Right cardiac atrium (tissue), 5 donors: ENCODE measurements at regions of chr4 and their contacts with region 1.

Region 1: DNA sequence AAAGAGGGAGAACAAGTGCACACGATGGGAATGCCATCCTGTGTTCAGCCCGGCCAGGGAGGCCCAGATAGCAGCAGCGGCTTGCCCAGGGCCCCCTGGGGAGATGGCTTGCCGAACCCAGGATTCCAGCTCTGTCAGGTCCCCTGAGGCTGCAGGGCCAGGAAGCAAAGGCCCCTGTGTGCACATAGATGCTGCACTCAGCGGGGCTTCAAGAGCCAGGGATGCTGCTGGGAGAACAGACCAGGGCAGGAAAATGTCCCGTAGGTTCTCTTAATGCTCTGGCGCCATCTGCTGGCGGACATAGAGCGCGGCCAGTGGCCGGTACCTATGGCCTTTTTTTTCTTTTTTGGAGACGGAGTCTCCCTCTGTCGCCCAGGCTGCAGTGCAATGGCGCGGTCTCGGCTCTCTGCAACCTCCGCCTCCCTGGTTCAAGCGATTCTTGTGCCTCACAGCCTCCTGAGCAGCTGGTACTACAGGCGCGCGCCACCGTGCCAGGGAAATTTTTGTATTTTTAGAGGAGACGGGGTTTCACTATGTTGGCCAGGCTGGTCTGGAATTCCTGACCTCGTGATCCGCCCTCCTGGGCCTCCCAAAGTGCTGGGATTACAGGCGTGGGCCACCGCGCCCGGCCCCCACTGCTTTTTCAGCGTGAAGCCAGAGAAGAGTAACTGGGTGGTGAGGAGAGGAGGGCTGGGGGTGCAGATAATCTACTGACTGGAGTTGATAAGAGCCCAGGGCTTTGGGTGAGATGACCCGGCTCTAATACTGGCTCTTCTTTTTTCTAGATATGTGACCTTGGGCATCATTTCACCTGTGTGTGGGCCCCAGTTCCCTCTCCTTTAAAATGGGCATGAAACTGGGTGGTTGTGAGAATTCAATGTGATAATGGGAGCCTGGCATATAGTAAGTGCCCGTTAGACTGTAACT is 22.5 kb downstream of the MED28 start:
- DNase-seq: peak; percentile 75 to 90 (median 89)
- ATAC-seq: peak; percentile 81 to 89
- H3K4me3 ChIP-seq: no peak overlapping the region
- H3K27ac ChIP-seq: no peak overlapping the region
- H3K4me1 ChIP-seq: no peaks in the 10 kb centered on the region
- H3K27me3 ChIP-seq: no peaks in the 10 kb centered on the region

Region 2: DNA sequence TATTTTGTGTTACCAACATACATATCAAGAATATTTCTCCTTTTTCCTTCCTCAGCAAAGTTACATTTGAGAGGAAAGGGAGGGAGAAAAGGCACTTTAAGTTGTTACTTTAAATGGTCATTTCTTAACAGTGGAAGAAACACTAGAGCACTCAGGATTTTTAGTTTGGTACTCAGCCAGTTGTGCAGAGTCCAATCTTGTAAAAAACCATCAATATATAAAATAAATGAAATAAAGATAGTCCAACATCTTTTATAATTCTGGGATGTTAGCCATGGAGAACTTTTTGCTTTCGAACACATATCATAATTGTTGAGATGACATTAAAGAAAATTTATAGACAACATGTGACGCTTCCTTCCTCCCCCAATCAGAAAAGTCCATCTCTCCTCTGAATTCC is 378.9 kb before region 1 on chr4:
- intact Hi-C with region 1: no loop called
- DNase-seq: no peak
- ATAC-seq: no peak
- H3K4me3 ChIP-seq: no peak overlapping the region
- H3K27ac ChIP-seq: no peak overlapping the region
- H3K4me1 ChIP-seq: no peaks in the 10 kb centered on the region
- H3K27me3 ChIP-seq: no peaks in the 10 kb centered on the region

Region 3: GRCh38 chr4:17544831-17545234 is 92.1 kb before region 1 on chr4:
- intact Hi-C with region 1: loop called in 3 of 4 experiments (anchors 2 to 10 kb)
- DNase-seq: no peak
- ATAC-seq: no peak
- H3K4me3 ChIP-seq: no peak overlapping the region
- H3K27ac ChIP-seq: no peak overlapping the region
- H3K4me1 ChIP-seq: no peaks in the 10 kb centered on the region
- H3K27me3 ChIP-seq: no peaks in the 10 kb centered on the region

Region 4: DNA sequence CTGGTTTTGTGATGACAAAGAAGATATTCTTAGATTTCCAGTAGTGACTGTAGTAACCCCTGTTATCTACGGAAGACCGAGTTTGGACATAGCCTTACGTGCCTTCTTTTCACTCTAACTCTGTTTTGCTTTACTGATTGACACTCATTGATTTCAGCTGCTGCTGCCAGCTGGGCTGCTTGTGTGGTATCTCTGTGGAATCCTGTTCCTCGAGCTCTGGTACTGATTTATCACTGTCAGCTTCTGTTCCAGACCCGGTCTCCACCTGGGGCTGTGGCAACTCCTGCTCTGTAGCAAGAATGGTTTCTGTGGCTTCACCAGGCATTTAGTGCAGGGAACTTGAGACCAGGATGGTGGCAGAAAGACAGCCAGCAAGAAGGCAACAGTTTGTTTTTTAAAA is 84.5 kb before region 1 on chr4:
- intact Hi-C with region 1: loop called in 3 of 4 experiments (anchors 2 to 10 kb)
- DNase-seq: no peak
- ATAC-seq: no peak
- H3K4me3 ChIP-seq: no peak overlapping the region
- H3K27ac ChIP-seq: no peak overlapping the region
- H3K4me1 ChIP-seq: no peaks in the 10 kb centered on the region
- H3K27me3 ChIP-seq: no peaks in the 10 kb centered on the region